Vagina (tissue), 2 donors: ENCODE measurements at regions of chr20 and their contacts with region 1.

Region 1: GRCh38 chr20:561437-562231 is 18.0 kb upstream of the CSNK2A1 start:
- DNase-seq: no peak
- H3K4me3 ChIP-seq: no peak overlapping the region
- H3K27ac ChIP-seq: no peak overlapping the region
- H3K4me1 ChIP-seq: no peaks in the 10 kb centered on the region
- H3K27me3 ChIP-seq: no peaks in the 10 kb centered on the region
- CTCF ChIP-seq: peak; percentile 73 to 85 (median 78)
- POLR2A ChIP-seq: no peak

Region 2: GRCh38 chr20:621125-621756 is 59.6 kb after region 1 on chr20:
- intact Hi-C with region 1: no loop called
- DNase-seq: no peak
- H3K4me3 ChIP-seq: no peak overlapping the region
- H3K27ac ChIP-seq: no peak overlapping the region
- H3K4me1 ChIP-seq: no peaks in the 10 kb centered on the region
- H3K27me3 ChIP-seq: no peaks in the 10 kb centered on the region
- CTCF ChIP-seq: no peak
- POLR2A ChIP-seq: no peak

Region 3: DNA sequence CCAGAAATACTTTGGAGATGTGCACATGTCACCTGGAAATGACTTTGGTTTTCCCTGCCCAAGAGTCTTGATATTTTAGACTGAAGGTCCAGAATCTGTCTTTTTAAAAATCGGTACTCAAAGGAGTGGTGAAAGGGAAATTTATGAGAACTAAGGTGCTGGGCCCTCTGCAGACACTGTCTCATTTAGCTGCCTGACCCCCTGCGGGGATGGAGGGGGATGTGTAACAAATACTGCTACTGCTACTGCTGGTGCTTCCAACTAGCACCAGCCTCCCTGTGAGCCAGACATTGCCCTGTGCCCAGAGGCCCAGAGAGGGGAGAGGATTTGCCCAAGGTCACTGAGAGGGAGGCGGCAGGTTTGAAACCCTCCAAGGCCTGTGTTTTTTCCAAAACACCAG is 107.0 kb after region 1 on chr20:
- intact Hi-C with region 1: loop called (anchors 1 kb)
- DNase-seq: no peak
- H3K4me3 ChIP-seq: no peak overlapping the region
- H3K27ac ChIP-seq: no peak overlapping the region
- H3K4me1 ChIP-seq: no peaks in the 10 kb centered on the region
- H3K27me3 ChIP-seq: peaks cover 8% of the 10 kb centered on the region
- CTCF ChIP-seq: no peak
- POLR2A ChIP-seq: no peak

Region 4: GRCh38 chr20:733861-734260 is 172.2 kb after region 1 on chr20:
- intact Hi-C with region 1: loop called (anchors 10 kb)
- DNase-seq: no peak
- H3K4me3 ChIP-seq: no peak overlapping the region
- H3K27ac ChIP-seq: no peak overlapping the region
- H3K4me1 ChIP-seq: no peaks in the 10 kb centered on the region
- H3K27me3 ChIP-seq: no peaks in the 10 kb centered on the region
- CTCF ChIP-seq: no peak
- POLR2A ChIP-seq: no peak